MCF 10A (cell line): ENCODE measurements at regions of chr5 and their contacts with region 1.

Region 1: GRCh38 chr5:145936401-145937131 is at the start of gene SH3RF2:
- DNase-seq: peak; percentile 94
- H3K4me3 Mint-ChIP-seq: peak within 1 kb of the TSS; percentile 87
- H3K27ac Mint-ChIP-seq: peak within 1 kb of the TSS; percentile 82
- H3K4me1 Mint-ChIP-seq: peaks cover 62% of the 10 kb centered on the region
- H3K27me3 Mint-ChIP-seq: no peaks in the 10 kb centered on the region
- CTCF ChIP-seq: no peak
- total RNA-seq, gene SH3RF2: 14.9 and 29.6 TPM in 2 replicates

Region 2: DNA sequence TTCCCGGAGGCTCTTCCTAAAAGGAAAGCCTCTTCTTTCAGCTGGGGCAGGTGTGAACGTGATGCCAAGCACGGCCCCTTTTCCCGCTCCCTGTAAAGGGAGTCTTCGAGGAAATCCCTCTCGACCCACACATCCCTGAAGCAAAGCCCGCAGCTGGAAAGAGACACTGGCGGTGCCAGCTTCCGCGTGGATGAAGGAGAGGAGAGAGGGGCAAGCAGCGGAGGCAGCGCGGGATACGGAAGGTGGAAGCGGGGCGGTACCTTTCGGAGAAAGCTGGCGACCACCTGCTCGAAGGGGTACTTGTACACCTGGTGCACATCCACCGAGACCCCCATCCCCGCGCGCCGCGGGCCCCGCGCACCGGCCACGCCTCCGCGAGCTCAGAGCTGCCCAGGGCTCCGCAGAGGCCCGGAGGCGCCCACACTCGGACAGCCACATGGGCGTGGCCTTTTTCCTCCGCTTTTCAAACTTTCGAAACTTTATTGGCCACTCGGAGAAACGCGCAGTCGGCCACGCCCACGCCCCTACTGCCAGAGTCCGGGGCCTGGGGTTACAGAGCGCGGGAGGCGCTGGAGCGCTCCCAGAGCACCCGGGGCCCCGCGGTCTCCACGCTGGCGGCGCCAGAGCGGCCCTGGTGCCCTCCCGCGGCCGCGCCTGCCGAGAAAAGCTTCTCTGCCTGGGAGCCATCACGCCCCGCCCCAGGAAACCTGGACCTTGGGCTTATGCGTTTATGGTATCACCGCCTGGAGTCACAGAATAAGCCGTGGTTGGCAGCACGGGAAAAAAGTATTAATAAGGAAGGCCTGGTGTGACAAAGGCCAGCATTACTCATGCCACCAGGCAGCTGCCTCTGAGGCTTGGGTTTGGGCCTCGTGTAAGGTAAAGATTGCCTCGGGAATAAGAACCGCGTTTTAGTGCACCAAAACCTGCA is 101.4 kb before region 1 on chr5 and contains the start of gene PRELID2:
- CTCF ChIA-PET with region 1: no interaction called
- POLR2A ChIA-PET with region 1: interaction called, 27 read pairs
- intact Hi-C with region 1: no loop called
- DNase-seq: peak; percentile 94
- H3K4me3 Mint-ChIP-seq: peak within 1 kb of the TSS; percentile 73
- H3K27ac Mint-ChIP-seq: no peak within 1 kb of the TSS
- H3K4me1 Mint-ChIP-seq: peaks cover 35% of the 10 kb centered on the region
- H3K27me3 Mint-ChIP-seq: no peaks in the 10 kb centered on the region
- CTCF ChIP-seq: no peak
- total RNA-seq, gene PRELID2: 11.4 and 11.7 TPM in 2 replicates

Region 3: GRCh38 chr5:145908205-145908945 is 28.2 kb before region 1 on chr5:
- CTCF ChIA-PET with region 1: interaction called, 31 read pairs
- POLR2A ChIA-PET with region 1: interaction called, 32 read pairs
- intact Hi-C with region 1: no loop called
- DNase-seq: peak; percentile 51
- H3K4me3 Mint-ChIP-seq: no peak overlapping the region
- H3K27ac Mint-ChIP-seq: no peak overlapping the region
- H3K4me1 Mint-ChIP-seq: peaks cover 5% of the 10 kb centered on the region
- H3K27me3 Mint-ChIP-seq: no peaks in the 10 kb centered on the region
- CTCF ChIP-seq: peak; percentile 62

Region 4: DNA sequence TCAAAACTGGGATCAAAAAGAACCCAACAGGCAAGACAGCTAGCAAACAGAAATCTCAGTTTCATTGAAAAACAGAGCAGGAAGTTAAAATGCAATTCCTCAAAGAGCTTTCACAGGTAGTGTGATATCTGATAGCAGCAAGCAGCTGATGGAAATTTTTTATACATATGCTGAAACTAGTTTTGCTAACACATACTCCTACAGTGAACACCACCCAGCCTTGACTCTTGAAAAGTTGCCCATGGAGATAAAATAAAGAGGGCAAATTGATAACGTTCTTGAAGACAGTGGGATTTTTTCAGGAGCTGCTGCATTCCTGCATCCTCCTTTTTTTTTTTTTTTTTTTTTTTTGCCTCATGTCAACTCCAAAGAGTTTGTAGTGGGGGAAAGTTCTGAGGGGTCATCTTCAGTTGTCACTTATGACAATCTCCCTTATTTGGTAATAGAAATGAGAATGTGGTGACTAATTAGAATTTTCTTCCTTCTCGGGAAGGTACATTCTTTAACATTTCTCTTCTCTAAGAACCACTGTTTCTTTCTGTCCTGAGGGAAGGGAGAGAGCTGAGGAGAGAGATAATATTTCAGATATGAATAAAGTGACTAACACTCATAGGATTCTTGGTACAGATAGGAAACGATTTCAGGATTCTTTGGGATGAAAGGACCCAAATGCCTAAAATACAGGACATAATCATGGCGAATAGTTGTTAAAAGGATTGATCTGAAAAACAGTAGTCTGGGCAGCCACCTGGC is 24.5 kb after region 1 on chr5:
- CTCF ChIA-PET with region 1: interaction called, 4 read pairs
- POLR2A ChIA-PET with region 1: interaction called, 13 read pairs
- intact Hi-C with region 1: no loop called
- DNase-seq: no peak
- H3K4me3 Mint-ChIP-seq: no peak overlapping the region
- H3K27ac Mint-ChIP-seq: peak overlapping the region; percentile 74
- H3K4me1 Mint-ChIP-seq: peaks cover 39% of the 10 kb centered on the region
- H3K27me3 Mint-ChIP-seq: no peaks in the 10 kb centered on the region
- CTCF ChIP-seq: no peak

Region 5: DNA sequence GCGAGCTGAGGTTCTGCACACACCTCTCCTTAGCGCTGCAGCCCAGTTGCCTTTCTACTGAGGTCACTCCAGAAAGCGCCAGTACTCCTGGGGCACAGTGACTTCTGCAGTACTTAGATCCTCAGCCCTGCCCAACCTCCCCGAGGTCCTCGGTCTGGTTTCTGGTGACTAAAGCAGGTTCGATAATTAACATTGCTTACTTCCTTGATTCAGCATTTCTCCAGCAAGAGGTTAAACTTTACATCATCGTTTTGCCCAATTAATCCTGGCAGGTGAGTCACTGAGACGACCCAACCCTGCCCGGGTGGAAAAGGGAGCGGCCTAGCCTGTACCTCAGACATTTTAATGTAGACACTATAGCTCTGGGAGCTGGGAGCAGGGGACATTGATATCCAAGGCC is 91.2 kb after region 1 on chr5:
- CTCF ChIA-PET with region 1: interaction called, 4 read pairs
- POLR2A ChIA-PET with region 1: interaction called, 67 read pairs
- intact Hi-C with region 1: loop called (anchors 5 kb)
- DNase-seq: peak; percentile 89
- H3K4me3 Mint-ChIP-seq: peak overlapping the region; percentile 52
- H3K27ac Mint-ChIP-seq: peak overlapping the region; percentile 78
- H3K4me1 Mint-ChIP-seq: peaks cover 20% of the 10 kb centered on the region
- H3K27me3 Mint-ChIP-seq: no peaks in the 10 kb centered on the region
- CTCF ChIP-seq: no peak